Gastrocnemius medialis (tissue), 4 donors: ENCODE measurements at regions of chr17 and their contacts with region 1.

Region 1: DNA sequence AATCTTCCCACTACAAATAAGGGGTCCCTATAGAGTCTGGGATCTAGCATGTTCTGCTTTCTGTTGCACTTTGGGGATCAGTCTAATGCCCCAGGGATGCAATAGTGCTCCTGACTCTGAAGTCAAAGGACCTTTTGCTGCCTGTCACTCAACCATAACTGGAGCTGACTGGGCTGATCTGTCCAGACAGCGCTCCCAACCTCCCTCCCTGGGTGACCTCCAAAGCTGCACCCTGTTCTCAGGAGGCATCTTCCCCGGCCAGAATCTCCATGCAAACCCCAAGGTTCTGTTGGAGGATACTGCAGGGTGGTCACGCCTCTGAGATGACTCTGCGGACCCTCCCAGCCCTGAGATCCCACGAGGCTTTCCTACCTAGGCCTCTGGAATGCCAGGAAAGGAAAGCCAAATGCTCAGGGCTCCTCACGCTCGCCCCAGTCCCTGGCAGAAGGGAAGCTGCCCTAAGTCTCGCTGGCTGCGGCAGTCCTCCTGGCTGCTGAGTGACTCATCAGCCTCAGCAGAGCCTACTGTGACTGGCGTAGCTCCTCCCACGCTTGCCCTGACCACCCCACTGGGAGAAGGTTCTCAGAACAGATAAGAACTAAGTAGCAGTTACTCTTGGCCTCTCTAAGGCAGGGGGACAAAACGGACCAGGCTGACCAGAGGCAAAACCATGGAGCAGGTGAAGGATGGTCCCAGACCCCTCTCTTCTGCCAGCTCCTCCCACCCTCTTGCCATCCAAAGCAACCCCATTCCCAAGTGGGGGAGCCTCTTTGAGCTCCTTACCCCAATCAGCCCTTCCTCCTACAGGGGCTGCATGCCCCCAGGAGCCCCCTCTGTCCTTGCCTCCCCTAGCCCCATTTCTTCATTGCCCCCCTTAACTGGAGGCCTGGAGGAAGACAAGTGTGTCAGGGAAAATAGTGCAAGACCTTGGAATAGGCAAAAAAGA is 124.1 kb upstream of the TNRC6C start:
- DNase-seq: peak; percentile 73 to 84
- ATAC-seq: peak; percentile 77 to 79
- H3K4me3 ChIP-seq: peak overlapping the region in 1 of 4 donors; percentile 30
- H3K27ac ChIP-seq: peak overlapping the region; percentile 79 to 88 (median 84)
- H3K4me1 ChIP-seq: peaks cover 26 to 55% of the 10 kb centered on the region in 2 donors
- H3K27me3 ChIP-seq: no peaks in the 10 kb centered on the region
- CTCF ChIP-seq: no peak
- POLR2A ChIP-seq: peak; percentile 44 to 54

Region 2: GRCh38 chr17:77692571-77693161 is 141.8 kb before region 1 on chr17:
- in situ Hi-C with region 1: no loop called
- intact Hi-C with region 1: no loop called
- DNase-seq: peak in 1 of 2 donors; percentile 27
- ATAC-seq: no peak
- H3K4me3 ChIP-seq: no peak overlapping the region
- H3K27ac ChIP-seq: no peak overlapping the region
- H3K4me1 ChIP-seq: peaks cover 5 to 6% of the 10 kb centered on the region in 2 donors
- H3K27me3 ChIP-seq: peaks cover 7 to 24% (median 15%) of the 10 kb centered on the region in 3 donors
- CTCF ChIP-seq: no peak
- POLR2A ChIP-seq: no peak

Region 3: DNA sequence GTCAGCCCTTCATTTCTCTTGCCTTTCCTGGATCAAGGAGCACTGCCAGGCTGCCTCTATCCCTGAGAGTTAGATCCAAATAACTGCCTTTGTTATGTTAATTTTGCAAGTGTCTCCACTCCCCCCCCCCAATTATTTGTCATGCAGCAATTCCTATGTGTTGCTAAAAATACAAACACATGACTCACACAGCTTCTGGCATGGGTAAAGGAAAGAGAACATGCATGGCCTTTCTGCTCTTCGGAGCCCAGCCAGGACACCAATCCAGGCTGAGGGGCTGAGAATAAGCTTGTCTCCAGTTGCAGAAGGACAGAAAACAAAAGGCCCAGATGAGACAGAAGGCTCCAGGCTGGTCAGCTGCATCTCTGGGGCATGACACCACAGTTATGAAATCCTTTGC is 23.9 kb before region 1 on chr17:
- in situ Hi-C with region 1: no loop called
- intact Hi-C with region 1: loop called (anchors 1 kb)
- DNase-seq: peak; percentile 58 to 76
- ATAC-seq: peak; percentile 95 to 97
- H3K4me3 ChIP-seq: no peak overlapping the region
- H3K27ac ChIP-seq: peak overlapping the region; percentile 70 to 81 (median 74)
- H3K4me1 ChIP-seq: peaks cover 20 to 29% of the 10 kb centered on the region in 2 donors
- H3K27me3 ChIP-seq: no peaks in the 10 kb centered on the region
- CTCF ChIP-seq: no peak
- POLR2A ChIP-seq: no peak

Region 4: GRCh38 chr17:77867308-77867781 is 32.9 kb after region 1 on chr17:
- in situ Hi-C with region 1: no loop called
- intact Hi-C with region 1: loop called (anchors 1 kb)
- DNase-seq: no peak
- ATAC-seq: no peak
- H3K4me3 ChIP-seq: no peak overlapping the region
- H3K27ac ChIP-seq: no peak overlapping the region
- H3K4me1 ChIP-seq: peaks cover 0 to 6% of the 10 kb centered on the region in 2 donors
- H3K27me3 ChIP-seq: no peaks in the 10 kb centered on the region
- CTCF ChIP-seq: no peak
- POLR2A ChIP-seq: no peak

Region 5: GRCh38 chr17:77887464-77888241 is 53.2 kb after region 1 on chr17:
- in situ Hi-C with region 1: no loop called
- intact Hi-C with region 1: loop called (anchors 5 kb)
- DNase-seq: peak; percentile 67 to 84
- ATAC-seq: peak; percentile 87 to 91
- H3K4me3 ChIP-seq: peak overlapping the region; percentile 61 to 65 (median 62)
- H3K27ac ChIP-seq: peak overlapping the region; percentile 56 to 67 (median 65)
- H3K4me1 ChIP-seq: peaks cover 5 to 11% of the 10 kb centered on the region in 2 donors
- H3K27me3 ChIP-seq: no peaks in the 10 kb centered on the region
- CTCF ChIP-seq: no peak
- POLR2A ChIP-seq: peak; percentile 26 to 40

Region 6: DNA sequence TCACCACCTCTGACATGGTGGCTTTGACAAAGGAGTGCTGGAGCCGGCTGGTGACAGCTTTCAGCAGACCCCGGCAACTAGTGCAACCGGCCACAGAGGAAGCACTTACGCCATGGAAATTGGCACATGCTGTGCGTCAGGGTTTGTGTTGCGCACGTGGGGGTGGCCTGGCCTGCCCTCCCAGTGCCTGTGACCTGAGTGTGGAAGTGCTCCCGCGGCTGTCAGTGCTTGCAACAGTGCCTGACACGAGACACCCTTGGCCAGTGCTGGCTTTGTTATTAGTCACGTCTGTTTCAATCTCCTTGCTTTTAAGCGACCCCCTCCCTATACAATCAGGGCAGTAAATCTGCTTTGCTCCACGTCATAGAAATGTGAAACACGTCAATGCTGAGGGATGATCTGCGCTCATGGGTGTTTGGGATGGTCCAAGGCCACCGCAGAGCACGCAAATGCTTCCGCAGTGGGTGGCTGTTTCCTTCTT is 608.2 kb after region 1 on chr17:
- in situ Hi-C with region 1: no loop called
- intact Hi-C with region 1: loop called (anchors 10 kb)
- DNase-seq: peak; percentile 75 to 91
- ATAC-seq: peak; percentile 82 to 89
- H3K4me3 ChIP-seq: no peak overlapping the region
- H3K27ac ChIP-seq: peak overlapping the region; percentile 44 to 75 (median 59)
- H3K4me1 ChIP-seq: peaks cover 9 to 19% of the 10 kb centered on the region in 2 donors
- H3K27me3 ChIP-seq: no peaks in the 10 kb centered on the region
- CTCF ChIP-seq: peak in 1 of 5 experiments; percentile 26
- POLR2A ChIP-seq: peak; percentile 26 to 51